HepG2 (cell line): ENCODE measurements at regions of chr1 and their contacts with region 1.

Region 1: GRCh38 chr1:163589735-163590134 is 268.0 kb downstream of the NUF2 start:
- DNase-seq: no peak
- ATAC-seq: no peak
- H3K4me3 ChIP-seq: no peak overlapping the region
- H3K27ac ChIP-seq: no peak overlapping the region
- H3K4me1 ChIP-seq: no peaks in the 10 kb centered on the region
- H3K27me3 ChIP-seq: no peaks in the 10 kb centered on the region; a peak in 1 of 5 replicates
- CTCF ChIP-seq: no peak
- EP300 ChIP-seq: no peak
- POLR2A ChIP-seq: no peak
- RAD21 ChIP-seq: no peak

Region 2: GRCh38 chr1:163275222-163275621 is 314.5 kb before region 1 on chr1:
- CTCF ChIA-PET with region 1: no interaction called
- POLR2A ChIA-PET with region 1: no interaction called
- in situ Hi-C with region 1: no loop called
- intact Hi-C with region 1: no loop called
- DNase-seq: peak; percentile 7
- ATAC-seq: peak; percentile 50; the same call in 2 of the 3 replicates
- H3K4me3 ChIP-seq: no peak overlapping the region
- H3K27ac ChIP-seq: no peak overlapping the region
- H3K4me1 ChIP-seq: peaks cover 10% of the 10 kb centered on the region
- H3K27me3 ChIP-seq: no peaks in the 10 kb centered on the region; a peak in 1 of 5 replicates
- CTCF ChIP-seq: no peak
- EP300 ChIP-seq: no peak
- POLR2A ChIP-seq: no peak
- RAD21 ChIP-seq: no peak

Region 3: GRCh38 chr1:163561580-163562295 is 28.0 kb before region 1 on chr1:
- CTCF ChIA-PET with region 1: no interaction called
- POLR2A ChIA-PET with region 1: no interaction called
- in situ Hi-C with region 1: no loop called
- intact Hi-C with region 1: loop called (anchors 1 kb)
- DNase-seq: peak; percentile 9
- ATAC-seq: peak; percentile 64; the same call in 2 of the 3 replicates
- H3K4me3 ChIP-seq: no peak overlapping the region
- H3K27ac ChIP-seq: no peak overlapping the region
- H3K4me1 ChIP-seq: no peaks in the 10 kb centered on the region
- H3K27me3 ChIP-seq: no peaks in the 10 kb centered on the region
- CTCF ChIP-seq: peak; percentile 31
- EP300 ChIP-seq: no peak
- POLR2A ChIP-seq: no peak
- RAD21 ChIP-seq: no peak